Panc1 (cell line): ENCODE measurements at regions of chr5 and their contacts with region 1.

Region 1: GRCh38 chr5:92518318-92518904 is 1062.6 kb downstream of the NR2F1-AS1 start:
- DNase-seq: no peak
- ATAC-seq: no peak
- H3K4me3 ChIP-seq: no peak overlapping the region
- H3K27ac ChIP-seq: no peak overlapping the region
- H3K4me1 ChIP-seq: no peaks in the 10 kb centered on the region
- H3K27me3 ChIP-seq: no peaks in the 10 kb centered on the region
- CTCF ChIP-seq: peak; percentile 46

Region 2: GRCh38 chr5:92401492-92401891 is 116.9 kb before region 1 on chr5:
- CTCF ChIA-PET with region 1: no interaction called
- POLR2A ChIA-PET with region 1: no interaction called
- in situ Hi-C with region 1: no loop called
- intact Hi-C with region 1: no loop called
- DNase-seq: no peak
- ATAC-seq: no peak
- H3K4me3 ChIP-seq: no peak overlapping the region
- H3K27ac ChIP-seq: peak overlapping the region; percentile 55; the same call in 1 of the 2 replicates
- H3K4me1 ChIP-seq: no peaks in the 10 kb centered on the region
- H3K27me3 ChIP-seq: no peaks in the 10 kb centered on the region
- CTCF ChIP-seq: no peak

Region 3: GRCh38 chr5:92909602-92909962 is 391.2 kb after region 1 on chr5:
- CTCF ChIA-PET with region 1: interaction called, 12 read pairs
- POLR2A ChIA-PET with region 1: no interaction called
- in situ Hi-C with region 1: no loop called
- intact Hi-C with region 1: no loop called
- DNase-seq: no peak
- ATAC-seq: no peak
- H3K4me3 ChIP-seq: no peak overlapping the region
- H3K27ac ChIP-seq: peak overlapping the region; percentile 64; the same call in 1 of the 2 replicates
- H3K4me1 ChIP-seq: peaks cover 3% of the 10 kb centered on the region; the same call in 1 of the 2 replicates
- H3K27me3 ChIP-seq: no peaks in the 10 kb centered on the region
- CTCF ChIP-seq: peak; percentile 76